ENCODE measurements at regions of chrX and their contacts with region 1.

Region 1: GRCh38 chrX:69165087-69165651 is at the start of gene PJA1:
- DNase-seq: peak; percentile 16 to 87
- H3K4me3 ChIP-seq: peak within 1 kb of the TSS; percentile 61 to 76
- H3K27ac ChIP-seq: peak within 1 kb of the TSS; percentile 80 to 86
- H3K4me1 ChIP-seq: no peaks in the 10 kb centered on the region
- H3K27me3 ChIP-seq: no peaks in the 10 kb centered on the region
- CTCF ChIP-seq: no peak
- total RNA-seq, gene PJA1: 26.9 TPM

Region 2: DNA sequence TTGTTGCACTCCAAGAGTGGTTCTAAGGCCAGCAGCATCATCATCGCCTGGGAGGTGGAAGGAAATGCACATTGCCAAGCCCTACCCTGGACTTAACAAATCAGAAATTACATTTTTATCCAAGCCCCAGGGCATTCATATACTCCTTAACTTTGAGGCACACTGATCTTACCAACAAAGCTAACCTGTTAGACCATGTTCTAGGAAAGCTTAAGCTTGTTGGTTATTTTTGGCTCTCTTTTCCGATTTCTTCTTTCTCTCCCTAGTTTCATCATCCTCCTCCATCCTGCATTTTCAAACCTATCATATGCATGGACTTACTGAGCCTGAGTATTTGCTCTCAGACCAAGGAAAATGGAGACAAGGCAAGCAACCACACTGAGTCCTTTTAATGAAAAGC is 865.3 kb before region 1 on chrX:
- intact Hi-C with region 1: no loop called
- DNase-seq: no peak
- H3K4me3 ChIP-seq: no peak overlapping the region
- H3K27ac ChIP-seq: no peak overlapping the region
- H3K4me1 ChIP-seq: no peaks in the 10 kb centered on the region
- H3K27me3 ChIP-seq: no peaks in the 10 kb centered on the region
- CTCF ChIP-seq: no peak

Region 3: DNA sequence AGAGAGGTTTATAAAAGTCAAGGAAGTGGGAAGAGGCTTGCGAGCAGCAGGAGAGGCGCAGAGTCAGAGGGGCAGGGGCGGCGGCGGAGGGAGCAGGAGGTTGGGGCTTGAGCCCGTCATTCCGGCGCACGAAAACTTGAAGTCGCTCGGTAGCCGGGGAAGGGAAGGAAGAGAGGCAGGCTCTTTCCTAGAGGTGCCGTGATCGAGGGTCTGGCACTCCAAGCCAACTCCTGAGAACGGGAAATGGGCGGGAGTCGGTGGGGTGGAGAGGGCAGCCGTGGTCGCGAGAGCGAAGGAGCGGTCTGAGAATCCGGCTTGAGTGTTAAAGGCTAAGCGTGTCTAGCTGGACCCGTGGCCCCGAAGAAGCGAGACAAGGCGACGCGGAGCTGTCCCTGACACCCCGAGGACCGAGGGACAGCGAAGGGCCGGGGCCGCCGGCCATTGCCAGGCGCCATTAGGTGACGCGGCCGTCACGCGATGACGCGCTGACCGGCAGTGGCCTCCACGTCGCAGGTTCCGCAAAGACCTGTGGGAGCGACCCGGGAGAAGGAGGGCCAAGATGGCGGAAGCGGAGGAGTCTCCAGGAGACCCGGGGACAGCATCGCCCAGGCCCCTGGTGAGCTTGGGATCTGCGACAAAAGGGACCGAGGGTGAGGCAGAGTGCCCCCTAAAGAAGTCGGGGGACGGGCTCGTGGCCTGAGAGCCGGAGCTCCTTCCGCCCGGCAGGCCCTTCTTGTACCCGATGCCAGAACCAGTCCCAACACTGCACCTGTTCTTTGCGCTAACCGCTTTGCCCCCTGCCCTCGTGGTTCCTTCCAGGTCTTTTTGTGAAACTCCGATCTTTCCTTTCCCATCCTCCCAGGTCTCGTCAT is 666.4 kb before region 1 on chrX and contains the start of gene YIPF6:
- intact Hi-C with region 1: loop called (anchors 10 kb)
- DNase-seq: peak; percentile 22 to 87
- H3K4me3 ChIP-seq: peak within 1 kb of the TSS; percentile 62 to 66
- H3K27ac ChIP-seq: peak within 1 kb of the TSS; percentile 85 to 95
- H3K4me1 ChIP-seq: no peaks in the 10 kb centered on the region
- H3K27me3 ChIP-seq: no peaks in the 10 kb centered on the region
- CTCF ChIP-seq: no peak
- total RNA-seq, gene YIPF6: 14.4 TPM

Region 4: DNA sequence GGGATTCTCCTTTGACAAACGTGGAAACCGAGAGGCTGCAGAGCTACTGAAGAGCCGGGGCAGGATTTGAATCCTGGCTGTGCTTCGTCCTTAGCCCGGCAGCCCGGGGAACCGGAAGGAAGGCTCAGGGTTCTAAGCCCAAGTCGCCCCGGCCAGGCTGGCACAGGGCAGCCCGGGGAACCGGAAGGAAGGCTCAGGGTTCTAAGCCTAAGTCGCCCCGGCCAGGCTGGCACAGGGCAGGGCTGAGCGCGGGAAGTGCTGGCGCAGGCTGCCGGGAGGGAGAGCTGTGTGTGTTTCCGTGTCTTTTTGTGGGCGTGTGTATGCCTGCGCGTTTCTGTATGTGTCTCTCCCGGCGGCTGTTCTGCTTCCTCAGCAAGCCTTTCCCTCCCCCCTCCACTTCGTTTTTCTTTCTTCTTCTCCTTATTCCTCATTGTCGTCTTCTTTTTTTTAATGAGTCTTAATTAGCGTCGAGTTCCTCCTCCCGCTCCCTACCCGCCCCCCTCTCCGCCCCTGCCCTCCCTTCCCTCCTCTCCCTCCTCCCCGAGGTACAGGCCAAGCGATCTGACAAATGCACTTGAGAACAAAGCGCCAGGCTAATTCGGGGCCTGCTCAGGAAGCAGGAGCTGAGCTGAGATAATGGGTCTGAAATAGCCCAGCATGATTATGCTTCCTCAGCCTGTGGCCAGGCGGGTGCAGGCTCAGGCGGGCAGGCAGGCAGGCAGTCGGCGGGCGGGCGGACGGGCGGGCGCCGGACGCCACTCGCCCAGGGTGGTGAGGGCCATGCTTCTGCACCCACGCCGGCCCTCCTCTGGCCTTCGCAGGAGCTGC is 270.4 kb before region 1 on chrX:
- intact Hi-C with region 1: loop called (anchors 10 kb)
- DNase-seq: peak; percentile 31 to 84
- H3K4me3 ChIP-seq: peak overlapping the region in 1 of 2 donors; percentile 54
- H3K27ac ChIP-seq: peak overlapping the region; percentile 97
- H3K4me1 ChIP-seq: peaks cover 3 to 13% of the 10 kb centered on the region in 2 donors
- H3K27me3 ChIP-seq: no peaks in the 10 kb centered on the region
- CTCF ChIP-seq: no peak

Region 5: GRCh38 chrX:69285881-69286564 is 120.9 kb after region 1 on chrX:
- intact Hi-C with region 1: loop called (anchors 5 kb)
- DNase-seq: peak in 1 of 2 donors; percentile 71
- H3K4me3 ChIP-seq: peak overlapping the region; percentile 53 to 61
- H3K27ac ChIP-seq: peak overlapping the region in 1 of 2 donors; percentile 38
- H3K4me1 ChIP-seq: peaks cover 0 to 3% of the 10 kb centered on the region in 2 donors
- H3K27me3 ChIP-seq: no peaks in the 10 kb centered on the region
- CTCF ChIP-seq: peak; percentile 68 to 94 (median 88)

Region 6: GRCh38 chrX:69362856-69363255 is 197.7 kb after region 1 on chrX:
- intact Hi-C with region 1: loop called (anchors 10 kb)
- DNase-seq: no peak
- H3K4me3 ChIP-seq: no peak overlapping the region
- H3K27ac ChIP-seq: peak overlapping the region; percentile 51 to 53
- H3K4me1 ChIP-seq: peaks cover 0 to 3% of the 10 kb centered on the region in 2 donors
- H3K27me3 ChIP-seq: no peaks in the 10 kb centered on the region
- CTCF ChIP-seq: no peak

Region 7: DNA sequence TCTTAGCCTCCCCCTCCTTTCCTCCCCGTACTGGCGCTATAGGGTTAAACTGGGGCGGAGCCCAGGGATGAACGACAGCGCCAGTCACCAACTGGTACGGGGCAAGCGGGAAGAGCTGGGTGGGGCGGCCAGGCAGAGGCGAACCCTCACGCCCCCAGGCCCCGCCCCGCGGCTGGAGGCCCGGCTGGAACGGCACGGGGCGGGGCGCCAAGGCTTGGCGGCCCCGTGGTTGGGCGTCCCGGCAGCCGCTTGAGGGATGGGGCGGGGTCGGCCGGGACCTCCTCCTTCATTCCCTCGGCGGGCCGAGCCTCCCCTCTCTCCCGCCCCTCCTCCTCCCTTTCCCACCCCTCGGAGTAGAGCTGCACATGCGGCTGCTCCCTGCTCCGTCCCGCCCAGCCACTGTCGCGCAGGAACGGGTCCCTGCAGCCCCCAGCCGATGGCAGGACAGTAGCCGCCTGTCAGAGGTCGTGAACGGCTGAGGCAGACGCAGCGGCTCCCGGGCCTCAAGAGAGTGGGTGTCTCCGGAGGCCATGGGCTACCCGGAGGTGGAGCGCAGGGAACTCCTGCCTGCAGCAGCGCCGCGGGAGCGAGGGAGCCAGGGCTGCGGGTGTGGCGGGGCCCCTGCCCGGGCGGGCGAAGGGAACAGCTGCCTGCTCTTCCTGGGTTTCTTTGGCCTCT is 450.7 kb after region 1 on chrX and contains the start of gene EDA:
- intact Hi-C with region 1: loop called (anchors 10 kb)
- DNase-seq: peak; percentile 27 to 89
- H3K4me3 ChIP-seq: peak within 1 kb of the TSS; percentile 55 to 89
- H3K27ac ChIP-seq: peak within 1 kb of the TSS in 1 of 2 donors; percentile 21
- H3K4me1 ChIP-seq: no peaks in the 10 kb centered on the region
- H3K27me3 ChIP-seq: no peaks in the 10 kb centered on the region
- CTCF ChIP-seq: no peak
- total RNA-seq, gene EDA: 1.7 TPM

Measured in ascending aorta (tissue), 2 donors.